Activated B cell treated with CpG ODN at 0.5 μM for 24 hours (primary cell): ENCODE measurements at regions of chr17 and their contacts with region 1.

Region 1: DNA sequence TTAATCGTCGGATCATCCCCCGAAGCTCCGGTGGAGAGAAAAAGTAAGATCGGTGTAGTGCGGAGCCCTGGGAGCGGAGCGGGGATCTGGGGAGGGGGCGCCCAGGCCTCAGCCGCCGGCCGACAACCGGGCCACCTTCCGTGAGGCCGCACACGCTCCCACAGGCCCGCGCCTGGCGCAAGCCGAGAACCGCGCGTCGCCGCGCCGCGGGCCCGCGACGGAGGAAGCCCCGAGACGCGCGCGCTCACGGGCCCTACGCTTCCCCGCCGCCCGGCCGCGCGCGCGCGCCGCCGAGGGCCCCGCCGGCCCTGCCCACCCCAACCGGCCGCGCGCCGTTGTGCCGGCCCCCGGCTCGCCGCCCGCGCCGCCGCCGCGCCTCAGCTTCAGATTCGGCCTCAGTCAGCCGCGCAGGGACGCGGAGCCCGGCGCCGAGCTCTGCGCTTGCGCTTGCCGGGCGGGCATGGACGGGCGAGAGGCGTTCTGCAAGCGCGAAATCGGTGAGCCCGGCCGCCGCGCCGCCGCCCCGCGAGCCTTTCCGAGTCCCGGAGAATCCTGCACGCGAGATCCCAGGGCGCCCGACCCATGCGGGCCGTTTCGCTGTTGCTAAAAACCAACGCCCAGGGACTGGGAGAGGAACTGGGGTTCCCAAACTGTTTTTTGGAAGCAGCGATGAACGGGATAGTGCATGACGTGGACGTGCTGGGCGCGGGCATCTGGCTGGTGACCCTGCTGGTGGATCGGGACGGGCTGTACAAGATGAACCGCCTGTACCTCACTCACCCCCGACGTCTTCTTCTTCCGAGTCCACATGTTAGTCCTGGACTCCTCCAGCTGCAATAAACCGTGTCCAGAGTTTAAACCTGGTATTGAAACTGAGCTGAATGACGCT is 28.0 kb upstream of the LRRC37A start:
- DNase-seq: peak; percentile 79
- ATAC-seq: peak; percentile 88
- H3K4me3 Mint-ChIP-seq: peak overlapping the region; percentile 94
- H3K27ac Mint-ChIP-seq: peak overlapping the region; percentile 90
- H3K4me1 Mint-ChIP-seq: peaks cover 20% of the 10 kb centered on the region
- H3K27me3 Mint-ChIP-seq: peaks cover 7% of the 10 kb centered on the region
- CTCF ChIP-seq: no peak

Region 2: GRCh38 chr17:45782889-45783592 is 483.9 kb before region 1 on chr17:
- CTCF ChIA-PET with region 1: no interaction called
- POLR2A ChIA-PET with region 1: no interaction called
- intact Hi-C with region 1: loop called (anchors 10 kb)
- DNase-seq: no peak
- ATAC-seq: no peak
- H3K4me3 Mint-ChIP-seq: peak overlapping the region; percentile 66
- H3K27ac Mint-ChIP-seq: no peak overlapping the region
- H3K4me1 Mint-ChIP-seq: peaks cover 11% of the 10 kb centered on the region
- H3K27me3 Mint-ChIP-seq: peaks cover 58% of the 10 kb centered on the region
- CTCF ChIP-seq: no peak

Region 3: DNA sequence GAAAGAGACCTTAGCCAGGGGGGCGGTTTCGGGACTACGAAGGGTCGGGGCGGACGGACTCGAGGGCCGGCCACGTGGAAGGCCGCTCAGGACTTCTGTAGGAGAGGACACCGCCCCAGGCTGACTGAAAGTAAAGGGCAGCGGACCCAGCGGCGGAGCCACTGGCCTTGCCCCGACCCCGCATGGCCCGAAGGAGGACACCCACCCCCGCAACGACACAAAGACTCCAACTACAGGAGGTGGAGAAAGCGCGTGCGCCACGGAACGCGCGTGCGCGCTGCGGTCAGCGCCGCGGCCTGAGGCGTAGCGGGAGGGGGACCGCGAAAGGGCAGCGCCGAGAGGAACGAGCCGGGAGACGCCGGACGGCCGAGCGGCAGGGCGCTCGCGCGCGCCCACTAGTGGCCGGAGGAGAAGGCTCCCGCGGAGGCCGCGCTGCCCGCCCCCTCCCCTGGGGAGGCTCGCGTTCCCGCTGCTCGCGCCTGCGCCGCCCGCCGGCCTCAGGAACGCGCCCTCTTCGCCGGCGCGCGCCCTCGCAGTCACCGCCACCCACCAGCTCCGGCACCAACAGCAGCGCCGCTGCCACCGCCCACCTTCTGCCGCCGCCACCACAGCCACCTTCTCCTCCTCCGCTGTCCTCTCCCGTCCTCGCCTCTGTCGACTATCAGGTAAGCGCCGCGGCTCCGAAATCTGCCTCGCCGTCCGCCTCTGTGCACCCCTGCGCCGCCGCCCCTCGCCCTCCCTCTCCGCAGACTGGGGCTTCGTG is 372.7 kb before region 1 on chr17 and contains the start of gene MAPT:
- CTCF ChIA-PET with region 1: no interaction called
- POLR2A ChIA-PET with region 1: no interaction called
- intact Hi-C with region 1: loop called (anchors 1 kb)
- DNase-seq: peak; percentile 83
- ATAC-seq: peak; percentile 93
- H3K4me3 Mint-ChIP-seq: peak within 1 kb of the TSS; percentile 85
- H3K27ac Mint-ChIP-seq: peak within 1 kb of the TSS; percentile 50
- H3K4me1 Mint-ChIP-seq: peaks cover 27% of the 10 kb centered on the region
- H3K27me3 Mint-ChIP-seq: peaks cover 24% of the 10 kb centered on the region
- CTCF ChIP-seq: no peak
- total RNA-seq, gene MAPT: 0.18 and 0.22 TPM in 2 replicates

Region 4: DNA sequence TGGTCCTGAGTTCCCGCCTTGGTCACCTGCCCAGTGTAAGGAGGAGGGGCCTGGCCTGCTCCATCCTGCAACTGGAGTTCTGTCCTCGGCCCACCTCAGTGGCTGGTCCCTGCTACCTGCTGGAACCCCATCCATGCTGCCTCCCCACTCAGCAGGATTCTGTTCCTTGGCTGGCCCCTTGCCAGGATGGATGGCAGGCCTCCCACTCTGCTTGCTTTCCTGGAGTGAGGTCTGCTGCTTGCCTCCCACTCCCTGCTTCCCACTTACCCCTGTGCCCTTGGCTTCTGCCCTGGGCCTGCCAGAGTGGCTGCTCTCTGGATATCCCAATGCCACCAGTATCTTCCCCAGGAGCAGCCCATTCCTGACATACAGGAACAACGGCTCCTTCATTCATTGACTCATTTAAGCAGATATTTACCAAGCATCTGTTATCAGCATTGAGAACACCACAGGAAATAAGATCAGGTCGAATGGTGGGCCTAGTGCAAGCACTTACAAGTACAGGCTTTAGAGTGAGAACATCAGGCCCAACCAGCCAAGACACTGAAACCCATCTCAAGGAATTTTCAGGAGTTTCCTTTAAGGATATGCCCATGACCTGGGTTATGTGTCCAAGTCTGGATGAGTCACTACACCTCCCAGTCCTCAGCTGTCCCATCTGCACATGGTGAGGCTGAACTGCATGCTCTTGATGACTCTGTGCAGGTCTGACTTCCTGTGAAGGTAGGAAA is 729.1 kb after region 1 on chr17:
- CTCF ChIA-PET with region 1: no interaction called
- POLR2A ChIA-PET with region 1: no interaction called
- intact Hi-C with region 1: loop called (anchors 10 kb)
- DNase-seq: no peak
- ATAC-seq: no peak
- H3K4me3 Mint-ChIP-seq: no peak overlapping the region
- H3K27ac Mint-ChIP-seq: no peak overlapping the region
- H3K4me1 Mint-ChIP-seq: peaks cover 34% of the 10 kb centered on the region
- H3K27me3 Mint-ChIP-seq: no peaks in the 10 kb centered on the region
- CTCF ChIP-seq: no peak